ENCODE measurements at regions of chr1 and their contacts with region 1.

Region 1: DNA sequence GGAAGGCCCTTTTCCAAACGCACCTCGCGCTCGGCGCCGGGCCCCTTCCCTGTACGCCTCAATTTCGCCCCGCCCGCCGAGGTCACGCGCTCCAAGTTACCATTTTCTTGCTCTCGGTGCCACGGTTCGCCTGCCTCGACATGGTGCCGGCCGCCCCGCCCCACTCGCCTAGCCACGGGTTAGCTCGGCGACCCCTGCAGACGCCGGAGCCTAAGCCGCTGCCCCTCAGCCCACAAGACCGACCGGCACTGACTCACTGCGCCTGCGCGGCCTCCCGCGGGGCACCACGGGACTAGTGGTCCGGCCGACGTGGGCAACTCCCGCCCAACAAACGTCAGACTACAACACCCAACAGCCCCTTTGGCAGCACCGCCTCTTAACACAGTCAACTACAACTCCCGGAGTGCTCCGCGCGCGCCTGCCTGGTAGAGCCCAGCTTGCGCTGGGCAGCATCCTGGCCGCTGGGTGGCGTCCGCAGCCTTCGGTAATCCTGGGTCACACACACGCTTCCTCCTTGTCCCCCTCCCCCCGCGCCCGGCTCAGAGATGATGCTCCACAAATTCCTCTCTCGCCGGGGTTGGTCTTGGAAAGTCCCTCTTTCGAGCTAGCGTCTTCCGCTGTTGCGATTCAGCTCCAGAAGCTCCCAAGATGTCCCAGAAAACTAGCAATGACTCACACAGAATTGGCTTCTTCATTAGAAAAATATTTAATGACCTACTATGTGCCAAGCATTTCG is at the start of gene TRAPPC3:
- H3K4me3 ChIP-seq: peak within 1 kb of the TSS; percentile 90
- H3K27ac ChIP-seq: peak within 1 kb of the TSS; percentile 61; the same call in 1 of the 2 replicates
- H3K4me1 ChIP-seq: no peaks in the 10 kb centered on the region
- CTCF ChIP-seq: peak; percentile 99

Region 2: GRCh38 chr1:35851132-35851869 is 298.1 kb before region 1 on chr1:
- CTCF ChIA-PET with region 1: no interaction called
- POLR2A ChIA-PET with region 1: no interaction called
- H3K4me3 ChIP-seq: no peak overlapping the region
- H3K27ac ChIP-seq: no peak overlapping the region
- H3K4me1 ChIP-seq: no peaks in the 10 kb centered on the region
- CTCF ChIP-seq: no peak

Region 3: GRCh38 chr1:36160949-36161485 is 11.6 kb after region 1 on chr1:
- CTCF ChIA-PET with region 1: interaction called, 12 read pairs
- POLR2A ChIA-PET with region 1: interaction called, 28 read pairs
- H3K4me3 ChIP-seq: peak overlapping the region; percentile 54
- H3K27ac ChIP-seq: peak overlapping the region; percentile 78
- H3K4me1 ChIP-seq: peaks cover 5% of the 10 kb centered on the region
- CTCF ChIP-seq: peak; percentile 95

Region 4: DNA sequence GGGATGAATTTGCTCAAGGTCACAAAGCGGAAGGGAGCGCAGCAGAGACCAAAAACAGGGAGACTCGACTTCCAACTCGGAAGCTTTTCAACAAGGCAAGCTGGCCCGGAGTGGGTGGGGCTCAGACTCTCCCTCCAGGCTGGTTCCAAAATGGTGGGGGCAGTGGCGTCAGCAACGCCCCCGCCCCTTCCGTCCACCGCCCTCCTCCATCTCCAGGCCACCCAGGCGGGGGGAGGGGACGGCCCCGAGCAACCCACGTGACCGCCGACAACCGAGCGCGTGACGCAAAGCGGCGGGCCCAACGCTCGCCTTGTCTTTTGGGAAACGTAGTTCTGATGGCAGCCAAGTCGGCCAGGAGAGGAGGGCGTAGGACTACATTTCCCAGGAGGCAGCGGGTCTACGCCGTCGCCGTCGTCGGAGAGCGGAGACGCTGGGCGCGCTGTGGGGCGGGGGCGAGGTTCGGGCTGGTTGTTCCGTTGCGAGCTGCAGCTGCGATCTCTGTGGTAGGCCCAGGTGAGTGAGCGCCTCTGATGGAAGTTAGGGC is 74.7 kb after region 1 on chr1 and contains the start of gene THRAP3:
- CTCF ChIA-PET with region 1: interaction called, 24 read pairs
- POLR2A ChIA-PET with region 1: interaction called, 24 read pairs
- H3K4me3 ChIP-seq: peak within 1 kb of the TSS; percentile 98
- H3K27ac ChIP-seq: peak within 1 kb of the TSS; percentile 76
- H3K4me1 ChIP-seq: no peaks in the 10 kb centered on the region
- CTCF ChIP-seq: no peak

Region 5: DNA sequence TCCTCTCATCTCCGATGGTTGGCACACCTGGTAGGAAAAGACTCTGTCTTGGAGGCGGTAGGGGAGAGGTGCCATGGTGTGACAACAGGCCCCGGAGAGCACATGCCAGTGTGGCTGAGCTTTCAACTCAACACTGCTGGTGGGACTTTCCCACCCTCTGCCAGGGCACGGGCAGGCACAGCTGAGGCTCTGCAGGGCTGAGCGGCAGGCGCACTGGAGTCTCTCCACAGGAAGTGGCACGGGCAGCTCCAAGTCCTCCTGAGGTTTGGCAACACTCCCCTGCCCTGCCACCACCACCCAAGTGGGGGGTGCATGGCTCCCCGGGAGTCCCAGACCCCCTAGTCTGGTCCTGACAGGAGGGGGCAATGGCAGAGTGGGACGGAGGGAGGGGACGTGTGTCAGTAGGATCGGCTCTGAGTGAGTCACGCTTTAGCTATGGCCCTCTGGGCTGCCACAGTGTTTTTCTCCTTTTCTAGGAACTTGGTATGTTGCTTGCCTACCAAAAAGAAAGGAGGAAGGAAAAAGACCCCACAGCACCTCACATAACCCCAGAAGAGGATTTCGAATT is 201.3 kb after region 1 on chr1:
- CTCF ChIA-PET with region 1: no interaction called
- POLR2A ChIA-PET with region 1: no interaction called
- H3K4me3 ChIP-seq: no peak overlapping the region
- H3K27ac ChIP-seq: no peak overlapping the region
- H3K4me1 ChIP-seq: no peaks in the 10 kb centered on the region
- CTCF ChIP-seq: no peak

Region 6: GRCh38 chr1:36369061-36369861 is 219.9 kb after region 1 on chr1:
- CTCF ChIA-PET with region 1: interaction called, 23 read pairs
- POLR2A ChIA-PET with region 1: no interaction called
- H3K4me3 ChIP-seq: no peak overlapping the region
- H3K27ac ChIP-seq: no peak overlapping the region
- H3K4me1 ChIP-seq: peaks cover 12% of the 10 kb centered on the region
- CTCF ChIP-seq: peak; percentile 87

Region 7: DNA sequence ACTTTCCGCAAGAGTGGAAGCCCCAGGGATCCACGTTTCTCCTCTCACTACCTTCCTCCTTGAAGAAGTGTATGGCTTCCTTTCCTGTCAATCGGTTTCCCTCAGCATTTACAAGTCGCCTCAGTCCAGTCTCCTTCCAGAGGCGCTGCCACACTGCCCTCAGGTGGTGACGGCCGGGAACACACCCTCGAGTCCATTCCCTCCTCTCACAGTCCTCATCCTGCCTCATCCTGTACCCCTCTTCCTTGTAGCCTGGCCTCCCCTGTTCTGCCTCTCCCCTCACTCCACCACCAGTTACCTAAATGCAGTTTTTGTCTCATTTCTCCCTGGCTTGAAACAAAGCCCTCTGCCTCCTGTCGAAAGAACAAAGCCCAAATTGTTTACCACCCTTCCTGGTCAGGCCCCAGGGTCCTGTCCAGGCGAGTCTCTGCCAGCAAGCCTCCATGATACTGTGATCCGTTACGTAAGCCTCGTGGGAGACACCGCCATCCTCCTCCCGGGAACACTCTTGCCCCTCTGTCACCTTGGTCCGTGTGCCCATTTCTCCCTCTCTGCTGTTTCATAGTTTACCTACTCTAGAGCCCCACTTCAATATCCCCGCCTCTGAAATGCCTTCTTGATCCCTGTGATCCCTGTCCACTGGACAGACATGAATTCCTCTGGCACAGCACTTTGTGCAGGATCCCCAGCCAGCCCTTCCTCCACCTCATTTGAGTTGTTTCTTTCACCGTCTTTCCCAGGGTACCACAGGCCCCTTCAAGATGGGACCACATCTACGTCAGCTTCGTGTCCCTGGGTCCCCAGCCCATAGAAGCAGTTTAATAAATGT is 271.6 kb after region 1 on chr1:
- CTCF ChIA-PET with region 1: interaction called, 12 read pairs
- POLR2A ChIA-PET with region 1: interaction called, 3 read pairs
- H3K4me3 ChIP-seq: no peak overlapping the region
- H3K27ac ChIP-seq: no peak overlapping the region
- H3K4me1 ChIP-seq: no peaks in the 10 kb centered on the region
- CTCF ChIP-seq: peak; percentile 93

Measured in HEK293 (cell line).